Activated T-helper 1 cell treated with anti-CD3 and anti-CD28 coated beads, Interleukin-12 subunit alpha, Interleukin-12 subunit beta, Interleukin-2, Interleukin-4 antibody, amounts not matched to agents 30 ng/mL and 10 ng/mL and 1 ng/mL, durations not matched to agents 14 hours and 24 hours and 36 hours (primary cell): ENCODE measurements at regions of chr2 and their contacts with region 1.

Region 1: DNA sequence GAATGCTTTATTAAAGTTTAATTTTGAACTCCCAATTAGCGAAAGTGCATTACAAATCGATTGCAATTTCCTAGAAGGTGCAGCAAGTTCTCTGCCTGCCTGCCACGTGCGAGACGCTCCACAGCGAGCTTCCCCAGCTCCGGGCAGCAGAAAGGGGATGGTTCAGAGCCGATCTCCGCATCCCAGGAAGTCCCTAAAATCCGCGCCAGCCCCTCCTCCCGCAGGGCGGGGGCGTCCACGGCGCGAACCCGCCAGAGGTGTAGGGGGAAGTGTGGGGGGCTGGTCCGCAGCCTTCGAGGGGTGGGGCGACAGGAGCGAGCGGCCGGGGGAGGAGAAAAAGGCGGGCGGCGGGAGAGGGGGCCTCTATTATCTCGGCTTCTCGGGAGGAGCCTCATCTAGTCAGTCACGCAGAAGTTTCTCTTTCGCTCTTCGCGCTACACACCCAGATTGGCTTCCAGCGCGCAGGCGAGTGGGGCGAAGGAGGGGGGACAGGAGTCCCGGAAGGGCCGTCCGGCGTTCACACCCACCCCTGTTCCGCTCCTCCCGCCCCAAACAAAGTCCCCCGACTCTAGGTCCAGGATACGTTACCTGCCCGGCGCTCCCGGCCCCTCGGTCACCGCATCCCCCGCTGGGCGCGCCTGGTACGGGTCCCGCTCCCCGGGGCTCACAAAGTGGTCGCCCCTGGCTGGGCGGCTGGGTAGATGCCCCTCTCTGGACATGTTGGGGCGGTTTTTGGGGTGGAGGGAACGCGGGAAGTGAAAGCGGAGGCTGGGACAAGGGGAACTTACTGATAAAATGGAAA is 9.1 kb upstream of the NR4A2 start:
- DNase-seq: peak; percentile 85
- H3K4me3 Mint-ChIP-seq: peak overlapping the region; percentile 96
- H3K27ac Mint-ChIP-seq: peak overlapping the region; percentile 99
- H3K4me1 Mint-ChIP-seq: peaks cover 57% of the 10 kb centered on the region
- H3K27me3 Mint-ChIP-seq: no peaks in the 10 kb centered on the region

Region 2: DNA sequence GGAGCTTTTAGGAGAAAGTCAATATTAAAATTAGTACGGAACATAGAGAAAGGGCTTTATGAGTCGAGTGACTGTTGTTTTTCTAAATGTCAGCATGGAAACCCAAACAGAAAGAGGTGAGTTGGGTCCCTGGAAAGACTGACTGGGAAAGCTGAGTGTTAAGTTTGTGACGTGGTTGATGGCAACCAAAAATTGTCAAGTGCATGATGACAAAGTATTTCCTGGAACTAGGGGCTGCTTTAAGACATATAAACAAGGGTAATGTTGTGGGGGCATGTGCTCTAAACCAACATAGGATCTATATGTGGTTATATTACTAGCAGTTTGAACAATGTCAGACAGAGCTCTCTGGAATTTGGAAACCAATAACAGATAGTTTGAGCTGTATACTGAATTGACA is 43.6 kb after region 1 on chr2:
- intact Hi-C with region 1: loop called (anchors 1 kb)
- DNase-seq: no peak
- H3K4me3 Mint-ChIP-seq: no peak overlapping the region
- H3K27ac Mint-ChIP-seq: peak overlapping the region; percentile 75
- H3K4me1 Mint-ChIP-seq: peaks cover 37% of the 10 kb centered on the region
- H3K27me3 Mint-ChIP-seq: peaks cover 4% of the 10 kb centered on the region

Region 3: GRCh38 chr2:156435715-156436496 is 94.3 kb after region 1 on chr2 and contains the start of gene GPD2:
- intact Hi-C with region 1: loop called (anchors 1 kb)
- DNase-seq: peak; percentile 56
- H3K4me3 Mint-ChIP-seq: peak within 1 kb of the TSS; percentile 92
- H3K27ac Mint-ChIP-seq: peak within 1 kb of the TSS; percentile 98
- H3K4me1 Mint-ChIP-seq: peaks cover 34% of the 10 kb centered on the region
- H3K27me3 Mint-ChIP-seq: peaks cover 2% of the 10 kb centered on the region
- total RNA-seq, gene GPD2: 15.7 and 18.1 TPM in 2 replicates

Region 4: GRCh38 chr2:157468931-157469708 is 1127.5 kb after region 1 on chr2:
- intact Hi-C with region 1: loop called (anchors 1 kb)
- DNase-seq: no peak
- H3K4me3 Mint-ChIP-seq: peak overlapping the region; percentile 71
- H3K27ac Mint-ChIP-seq: peak overlapping the region; percentile 97
- H3K4me1 Mint-ChIP-seq: peaks cover 90% of the 10 kb centered on the region
- H3K27me3 Mint-ChIP-seq: no peaks in the 10 kb centered on the region